Mammary epithelial cell (primary cell): ENCODE measurements at regions of chr16 and their contacts with region 1.

Region 1: DNA sequence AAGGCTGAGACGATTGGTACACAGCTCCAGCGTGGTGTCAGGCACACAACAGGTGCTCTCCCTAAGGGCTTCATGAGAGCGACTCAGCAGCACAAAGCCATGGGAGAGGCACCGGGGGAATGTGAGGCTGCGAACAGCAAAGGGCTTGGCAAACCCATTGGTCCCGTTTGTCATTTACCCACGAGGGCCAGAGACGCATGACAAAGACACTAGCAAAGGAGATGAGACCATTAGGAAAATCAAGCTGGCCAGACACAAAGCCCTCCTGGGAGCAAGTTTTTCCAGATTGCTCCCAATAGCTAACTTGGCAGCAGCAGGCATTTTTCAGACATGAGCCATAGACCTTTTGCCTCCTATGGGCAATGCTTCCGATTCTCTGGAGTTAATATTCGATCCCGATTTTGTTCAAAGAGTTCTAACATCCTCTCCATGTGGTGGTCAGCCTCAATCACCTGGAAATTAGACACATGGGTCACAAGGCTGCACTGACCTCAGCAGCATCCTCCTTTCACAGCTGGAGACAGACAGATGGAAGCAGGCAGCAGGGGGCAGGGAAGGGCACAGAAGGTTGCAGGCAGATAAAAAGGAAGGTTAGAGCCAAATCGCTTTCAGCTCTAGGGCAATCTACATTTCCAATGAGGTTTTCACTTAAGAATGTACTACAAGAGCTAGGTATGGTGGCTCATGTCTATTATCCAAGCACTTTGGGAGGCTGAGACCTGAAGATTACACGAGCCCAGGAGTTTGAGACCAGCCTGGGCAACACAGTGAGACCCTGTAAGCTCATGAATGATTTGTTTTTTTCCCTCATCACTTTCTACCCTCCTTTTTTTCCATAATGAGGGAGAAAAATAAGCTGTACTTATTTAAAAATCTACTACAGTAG is 38.1 kb downstream of the TK2 start:
- DNase-seq: peak; percentile 71
- H3K4me3 ChIP-seq: no peak overlapping the region
- H3K27ac ChIP-seq: peak overlapping the region; percentile 52
- H3K4me1 ChIP-seq: peaks cover 74% of the 10 kb centered on the region
- H3K27me3 ChIP-seq: no peaks in the 10 kb centered on the region
- CTCF ChIP-seq: peak in 1 of 2 donors; percentile 29

Region 2: GRCh38 chr16:66552286-66553177 is 40.7 kb after region 1 on chr16 and contains the start of gene CKLF:
- CTCF ChIA-PET with region 1: no interaction called
- dilution Hi-C with region 1: no loop called
- in situ Hi-C with region 1: no loop called
- intact Hi-C with region 1: loop called (anchors 2 kb)
- DNase-seq: peak; percentile 84
- H3K4me3 ChIP-seq: peak within 1 kb of the TSS; percentile 53 to 61 (median 59)
- H3K27ac ChIP-seq: peak within 1 kb of the TSS; percentile 13
- H3K4me1 ChIP-seq: peaks cover 32% of the 10 kb centered on the region
- H3K27me3 ChIP-seq: no peaks in the 10 kb centered on the region
- CTCF ChIP-seq: no peak
- total RNA-seq, gene CKLF: 26.8 to 46.6 TPM

Region 3: DNA sequence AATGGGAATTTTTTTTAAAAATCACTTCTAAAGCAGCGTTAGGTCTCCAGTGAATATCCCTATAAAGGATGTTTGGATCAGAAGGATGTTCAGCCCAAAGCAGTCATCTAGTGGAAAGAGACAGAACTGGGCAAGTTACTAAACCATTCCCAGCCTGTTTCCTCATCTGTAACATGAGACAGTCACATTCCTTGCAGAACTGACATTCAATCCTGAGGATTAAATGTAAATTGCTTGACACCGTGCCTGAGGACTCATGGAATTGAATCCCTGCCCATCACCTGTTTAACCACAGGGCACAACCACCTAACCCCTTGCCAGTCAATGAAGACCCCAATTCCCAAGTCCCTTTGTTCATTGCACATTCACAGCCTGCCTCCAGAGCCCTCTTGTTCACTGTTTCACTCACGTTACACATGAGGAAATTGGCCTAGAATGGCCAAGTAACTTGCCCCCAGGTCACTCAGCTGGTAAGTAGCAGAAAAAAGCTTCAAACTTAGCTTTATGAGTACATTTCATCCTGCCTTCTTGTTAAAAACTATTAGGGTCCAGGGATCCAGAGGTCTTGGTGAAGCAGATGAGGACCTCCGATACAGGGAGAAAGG is 68.8 kb after region 1 on chr16:
- CTCF ChIA-PET with region 1: no interaction called
- dilution Hi-C with region 1: loop called (anchors 5 kb)
- in situ Hi-C with region 1: no loop called
- intact Hi-C with region 1: no loop called
- DNase-seq: peak; percentile 64
- H3K4me3 ChIP-seq: no peak overlapping the region
- H3K27ac ChIP-seq: no peak overlapping the region
- H3K4me1 ChIP-seq: peaks cover 21% of the 10 kb centered on the region
- H3K27me3 ChIP-seq: no peaks in the 10 kb centered on the region
- CTCF ChIP-seq: peak; percentile 23 to 35